ENCODE measurements at regions of chr4 and their contacts with region 1.

Region 1: DNA sequence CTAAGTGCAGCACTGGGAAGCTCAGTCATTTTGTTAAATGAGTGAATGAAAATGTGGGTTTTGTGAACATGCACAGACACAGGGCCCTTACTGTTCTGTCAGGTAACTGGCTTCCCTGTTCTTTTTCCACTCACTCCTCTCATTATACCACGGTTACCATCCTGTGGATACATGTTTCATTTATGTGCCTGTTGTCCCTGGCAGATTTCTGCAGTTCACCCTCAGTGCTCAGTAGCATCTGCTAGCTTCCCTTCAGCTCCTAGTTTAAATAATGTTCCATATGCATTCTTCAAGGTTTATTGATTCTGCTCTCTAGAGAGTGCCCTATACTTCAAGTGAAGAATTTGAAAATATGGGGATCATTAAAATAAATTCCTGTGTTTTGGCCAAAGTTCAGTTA is 1634.3 kb upstream of the ADGRL3 start:
- DNase-seq: no peak
- ATAC-seq: no peak
- H3K4me3 ChIP-seq: no peak overlapping the region
- H3K27ac ChIP-seq: no peak overlapping the region
- H3K4me1 ChIP-seq: no peaks in the 10 kb centered on the region
- H3K27me3 ChIP-seq: no peaks in the 10 kb centered on the region
- CTCF ChIP-seq: no peak

Region 2: DNA sequence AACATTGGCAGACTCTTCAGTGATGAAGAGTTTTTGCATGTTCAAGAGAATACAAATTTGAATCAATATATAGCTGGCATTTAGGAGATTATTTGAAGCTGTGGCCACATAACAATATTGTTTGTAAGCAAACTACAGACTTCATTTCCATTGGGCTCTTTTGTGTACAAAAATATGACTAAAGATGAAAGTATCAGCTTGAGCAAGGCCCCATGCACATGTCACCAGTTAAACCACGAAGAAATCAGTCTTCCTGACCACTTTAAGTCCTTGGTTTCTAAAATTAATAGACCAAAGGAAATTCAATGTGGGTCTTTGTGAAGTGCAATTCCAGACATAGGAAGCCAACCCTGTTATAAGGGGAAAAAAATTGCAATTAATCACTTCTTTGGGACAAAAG is 30.3 kb before region 1 on chr4:
- intact Hi-C with region 1: no loop called
- DNase-seq: no peak
- ATAC-seq: no peak
- H3K4me3 ChIP-seq: no peak overlapping the region
- H3K27ac ChIP-seq: no peak overlapping the region
- H3K4me1 ChIP-seq: no peaks in the 10 kb centered on the region
- H3K27me3 ChIP-seq: no peaks in the 10 kb centered on the region
- CTCF ChIP-seq: no peak

Region 3: GRCh38 chr4:59597536-59598329 is 31.9 kb after region 1 on chr4:
- intact Hi-C with region 1: loop called in 1 of 10 experiments (anchors 1 kb)
- DNase-seq: no peak
- ATAC-seq: no peak
- H3K4me3 ChIP-seq: no peak overlapping the region
- H3K27ac ChIP-seq: no peak overlapping the region
- H3K4me1 ChIP-seq: no peaks in the 10 kb centered on the region
- H3K27me3 ChIP-seq: no peaks in the 10 kb centered on the region
- CTCF ChIP-seq: no peak

Region 4: GRCh38 chr4:59676389-59676788 is 110.6 kb after region 1 on chr4:
- intact Hi-C with region 1: no loop called
- DNase-seq: no peak
- ATAC-seq: no peak
- H3K4me3 ChIP-seq: no peak overlapping the region
- H3K27ac ChIP-seq: no peak overlapping the region
- H3K4me1 ChIP-seq: no peaks in the 10 kb centered on the region
- H3K27me3 ChIP-seq: no peaks in the 10 kb centered on the region
- CTCF ChIP-seq: no peak

Measured in heart right ventricle (tissue), 16 donors.